Heart right ventricle (tissue), 16 donors: ENCODE measurements at regions of chrX and their contacts with region 1.

Region 1: DNA sequence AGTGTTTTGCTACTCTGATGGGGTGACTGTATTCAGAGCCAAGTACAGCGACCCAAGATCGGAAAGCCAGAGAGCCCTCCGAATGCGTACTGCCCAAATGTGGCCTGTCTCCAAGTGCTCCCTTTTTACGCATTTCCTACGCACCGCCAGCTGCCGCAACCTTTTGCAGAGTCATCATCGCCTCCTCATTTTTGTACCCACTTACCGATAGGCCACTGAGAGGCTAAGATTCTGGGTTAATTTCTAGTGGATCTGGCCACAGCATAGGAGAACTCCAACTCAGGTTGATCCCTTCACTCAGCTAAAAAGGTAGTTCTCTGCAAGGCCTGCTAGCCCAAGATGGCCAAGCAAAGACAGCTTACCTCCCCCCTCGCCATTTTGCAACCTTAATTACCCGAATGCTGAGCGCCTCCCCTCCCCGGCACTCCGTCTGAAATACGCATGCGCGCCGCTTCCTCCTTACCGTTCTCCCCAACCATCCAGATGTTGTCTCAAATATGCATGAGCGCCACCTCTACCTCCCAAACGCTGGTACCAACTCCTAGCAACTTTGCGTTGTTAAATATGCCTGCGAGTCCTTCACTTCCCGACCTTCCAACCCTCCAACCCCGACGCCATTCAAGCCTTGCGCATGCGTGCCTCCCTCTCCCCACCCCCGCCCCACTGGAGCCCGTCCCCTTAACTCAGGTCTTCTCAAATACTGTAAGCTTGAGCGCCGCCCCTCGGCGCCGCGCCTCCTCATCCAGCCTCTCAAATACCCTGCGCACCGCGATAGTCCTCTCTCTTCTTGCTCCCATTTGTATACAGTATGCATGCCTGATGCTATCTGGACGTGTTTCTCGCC is 11.8 kb upstream of the ZCCHC13 start:
- DNase-seq: peak; percentile 84 to 86
- ATAC-seq: peak; percentile 91 to 98 (median 96)
- H3K4me3 ChIP-seq: peak overlapping the region; percentile 49 to 77 (median 62)
- H3K27ac ChIP-seq: peak overlapping the region; percentile 67 to 94 (median 92)
- H3K4me1 ChIP-seq: peaks cover 0 to 27% (median 10%) of the 10 kb centered on the region in 9 donors
- H3K27me3 ChIP-seq: peaks cover 0 to 16% (median 0%) of the 10 kb centered on the region in 7 donors
- CTCF ChIP-seq: peak in 5 of 9 donors; percentile 16 to 42 (median 39)

Region 2: GRCh38 chrX:73478961-73479360 is 813.2 kb before region 1 on chrX:
- intact Hi-C with region 1: no loop called
- DNase-seq: no peak
- ATAC-seq: no peak
- H3K4me3 ChIP-seq: no peak overlapping the region
- H3K27ac ChIP-seq: no peak overlapping the region
- H3K4me1 ChIP-seq: no peaks in the 10 kb centered on the region
- H3K27me3 ChIP-seq: peaks cover 0 to 17% (median 0%) of the 10 kb centered on the region in 7 donors
- CTCF ChIP-seq: no peak

Region 3: DNA sequence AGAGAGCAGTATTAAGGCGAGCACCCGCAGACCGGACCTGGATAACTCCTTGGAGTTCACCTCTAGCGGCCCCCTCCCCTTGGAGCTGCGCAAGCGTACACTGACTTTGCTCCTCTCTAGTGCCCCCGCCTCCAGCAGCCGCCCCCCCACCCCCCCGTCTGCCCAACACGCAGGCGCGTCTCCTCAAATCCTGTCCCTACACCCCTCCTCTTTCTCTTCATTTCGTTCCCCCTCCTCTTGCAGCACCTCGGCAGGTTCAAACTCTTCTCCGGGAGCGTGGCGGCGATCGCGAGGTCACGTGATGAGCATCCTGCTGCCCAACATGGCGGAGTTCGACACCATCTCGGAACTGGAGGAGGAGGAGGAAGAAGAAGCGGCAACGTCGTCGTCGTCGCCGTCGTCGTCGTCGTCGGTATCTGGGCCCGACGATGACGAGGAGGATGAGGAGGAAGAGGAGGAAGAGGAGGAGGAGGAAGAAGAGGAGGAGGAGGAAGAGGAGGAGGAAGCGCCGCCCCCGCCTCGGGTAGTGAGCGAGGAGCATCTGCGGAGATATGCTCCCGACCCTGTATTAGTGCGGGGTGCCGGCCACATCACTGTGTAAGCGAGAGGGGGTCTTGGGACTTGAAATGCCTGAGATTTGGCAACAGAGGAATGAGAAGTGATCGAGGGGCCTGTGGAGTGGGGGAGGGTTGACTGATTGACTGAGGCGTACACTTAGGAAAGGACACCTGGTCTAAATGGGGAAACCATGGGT is 729.0 kb before region 1 on chrX and contains the start of gene CHIC1:
- intact Hi-C with region 1: loop called in 1 of 10 experiments (anchors 10 kb)
- DNase-seq: peak; percentile 55 to 59
- ATAC-seq: peak; percentile 80 to 93 (median 86)
- H3K4me3 ChIP-seq: peak within 1 kb of the TSS; percentile 34 to 73 (median 63)
- H3K27ac ChIP-seq: peak within 1 kb of the TSS; percentile 35 to 85 (median 76)
- H3K4me1 ChIP-seq: peaks cover 0 to 10% (median 6%) of the 10 kb centered on the region in 9 donors
- H3K27me3 ChIP-seq: peaks cover 0 to 14% (median 0%) of the 10 kb centered on the region in 7 donors
- CTCF ChIP-seq: no peak
- total RNA-seq, gene CHIC1: 10.1 to 15.3 (median 12.0) TPM

Region 4: GRCh38 chrX:74251006-74251930 is 40.9 kb before region 1 on chrX:
- intact Hi-C with region 1: loop called in 1 of 10 experiments (anchors 5 kb)
- DNase-seq: no peak
- ATAC-seq: peak in 5 of 8 donors; percentile 20 to 60 (median 38)
- H3K4me3 ChIP-seq: no peak overlapping the region
- H3K27ac ChIP-seq: peak overlapping the region in 8 of 10 donors; percentile 5 to 69 (median 42)
- H3K4me1 ChIP-seq: peaks cover 0 to 47% (median 26%) of the 10 kb centered on the region in 9 donors
- H3K27me3 ChIP-seq: peaks cover 0 to 32% (median 0%) of the 10 kb centered on the region in 7 donors
- CTCF ChIP-seq: no peak

Region 5: GRCh38 chrX:74343343-74344279 is 51.4 kb after region 1 on chrX:
- intact Hi-C with region 1: loop called in 2 of 10 experiments (anchors 5 kb)
- DNase-seq: peak in 1 of 2 donors; percentile 63
- ATAC-seq: peak; percentile 38 to 99 (median 78)
- H3K4me3 ChIP-seq: no peak overlapping the region
- H3K27ac ChIP-seq: no peak overlapping the region
- H3K4me1 ChIP-seq: peaks cover 0 to 12% (median 0%) of the 10 kb centered on the region in 9 donors
- H3K27me3 ChIP-seq: peaks cover 0 to 13% (median 0%) of the 10 kb centered on the region in 7 donors
- CTCF ChIP-seq: peak; percentile 24 to 69 (median 60)

Region 6: GRCh38 chrX:74421036-74421739 is 129.0 kb after region 1 on chrX and contains the start of gene SLC16A2:
- intact Hi-C with region 1: loop called in 1 of 10 experiments (anchors 5 kb)
- DNase-seq: peak; percentile 74 to 82
- ATAC-seq: peak; percentile 70 to 87 (median 82)
- H3K4me3 ChIP-seq: peak within 1 kb of the TSS; percentile 41 to 68 (median 59)
- H3K27ac ChIP-seq: peak within 1 kb of the TSS; percentile 84 to 97 (median 91)
- H3K4me1 ChIP-seq: peaks cover 0 to 12% (median 5%) of the 10 kb centered on the region in 9 donors
- H3K27me3 ChIP-seq: peaks cover 0 to 66% (median 0%) of the 10 kb centered on the region in 7 donors
- CTCF ChIP-seq: no peak
- total RNA-seq, gene SLC16A2: 4.9 to 12.6 (median 7.4) TPM

Region 7: GRCh38 chrX:74536152-74536831 is 244.1 kb after region 1 on chrX:
- intact Hi-C with region 1: loop called in 2 of 10 experiments (anchors 2 to 10 kb)
- DNase-seq: peak; percentile 83 to 89
- ATAC-seq: peak; percentile 86 to 95 (median 92)
- H3K4me3 ChIP-seq: peak overlapping the region; percentile 25 to 61 (median 56)
- H3K27ac ChIP-seq: peak overlapping the region; percentile 74 to 94 (median 87)
- H3K4me1 ChIP-seq: peaks cover 0 to 16% (median 6%) of the 10 kb centered on the region in 9 donors
- H3K27me3 ChIP-seq: peaks cover 0 to 34% (median 0%) of the 10 kb centered on the region in 7 donors
- CTCF ChIP-seq: peak in 8 of 9 donors; percentile 20 to 53 (median 38)